Common myeloid progenitor, CD34-positive (primary cell): ENCODE measurements at regions of chr2 and their contacts with region 1.

Region 1: DNA sequence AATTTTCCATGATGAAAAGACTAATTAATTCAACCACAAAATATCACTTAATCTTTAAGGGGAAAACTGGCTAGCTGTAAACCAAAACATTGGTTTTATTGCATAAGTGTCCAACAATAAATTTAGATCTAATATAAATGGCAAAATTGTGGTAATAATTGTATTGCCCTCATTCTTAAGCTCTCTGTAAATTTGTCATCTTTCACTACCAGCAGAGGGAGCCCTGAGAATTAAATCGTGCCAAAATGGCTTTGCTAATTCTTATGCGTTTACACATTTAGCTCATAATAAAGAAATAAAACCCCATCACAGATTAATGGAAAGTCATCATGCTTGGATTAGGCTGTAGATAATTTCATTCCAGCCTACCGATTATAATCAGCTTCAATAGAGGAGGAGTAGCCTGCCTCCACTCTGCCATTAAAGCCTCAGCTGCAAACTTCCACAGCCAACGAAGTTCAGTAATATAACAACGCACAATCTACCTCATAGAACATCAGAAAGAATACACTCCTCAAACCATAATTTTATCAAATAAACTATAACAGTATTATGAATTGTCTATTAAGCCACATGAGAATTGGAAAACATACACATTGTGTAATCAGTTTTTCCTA is 70.0 kb upstream of the ATP5MC3 start:
- DNase-seq: peak; percentile 44 to 73 (median 66)
- H3K4me3 ChIP-seq: no peak overlapping the region
- H3K27ac ChIP-seq: no peak overlapping the region
- H3K4me1 ChIP-seq: no peaks in the 10 kb centered on the region
- H3K27me3 ChIP-seq: peaks cover 2 to 36% (median 9%) of the 10 kb centered on the region in 5 experiments

Region 2: GRCh38 chr2:175275539-175275938 is 24.0 kb after region 1 on chr2:
- CTCF ChIA-PET with region 1: interaction called, 10 read pairs
- POLR2A ChIA-PET with region 1: no interaction called
- DNase-seq: no peak
- H3K4me3 ChIP-seq: no peak overlapping the region
- H3K27ac ChIP-seq: no peak overlapping the region
- H3K4me1 ChIP-seq: no peaks in the 10 kb centered on the region
- H3K27me3 ChIP-seq: peaks cover 0 to 8% (median 2%) of the 10 kb centered on the region in 5 experiments

Region 3: DNA sequence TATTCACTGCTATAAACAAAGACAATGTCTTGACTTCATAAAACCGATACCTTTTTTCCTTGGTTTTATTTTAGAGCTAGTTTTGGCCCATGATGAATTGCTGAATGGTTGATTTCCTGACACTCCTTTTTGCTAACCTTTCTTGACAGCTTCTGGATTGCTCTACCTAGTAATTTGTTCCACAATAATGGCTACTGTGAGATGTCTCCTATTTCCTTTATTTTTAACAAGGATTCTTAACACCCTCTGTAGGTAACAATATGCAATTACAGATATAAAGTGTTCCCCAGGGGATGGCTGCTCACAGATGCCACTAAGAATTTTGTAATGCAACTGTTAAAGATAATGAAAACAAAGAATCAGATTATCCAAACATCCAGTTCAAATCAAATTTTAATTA is 30.8 kb after region 1 on chr2:
- CTCF ChIA-PET with region 1: interaction called, 31 read pairs
- POLR2A ChIA-PET with region 1: no interaction called
- DNase-seq: peak; percentile 16 to 37 (median 29)
- H3K4me3 ChIP-seq: no peak overlapping the region
- H3K27ac ChIP-seq: no peak overlapping the region
- H3K4me1 ChIP-seq: no peaks in the 10 kb centered on the region
- H3K27me3 ChIP-seq: peaks cover 0 to 10% (median 6%) of the 10 kb centered on the region in 5 experiments

Region 4: DNA sequence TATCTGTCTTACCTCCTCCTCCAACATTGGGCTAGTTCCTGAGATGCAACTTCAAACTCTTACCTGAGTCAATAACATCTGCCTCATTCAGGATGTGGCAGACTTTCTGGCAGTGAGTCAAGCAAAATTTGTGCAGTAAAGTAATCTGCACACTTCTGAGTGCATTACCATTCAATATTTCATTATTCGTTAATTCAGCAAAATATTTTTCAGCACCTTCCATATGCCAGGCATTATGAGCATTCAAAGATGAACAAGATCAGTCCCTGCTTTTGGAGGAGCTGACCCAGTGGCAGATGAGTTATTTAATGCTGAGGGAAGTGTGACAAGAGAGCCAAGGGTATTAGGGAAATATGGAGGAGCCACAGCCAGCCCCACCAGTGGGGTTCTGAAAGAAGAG is 410.8 kb after region 1 on chr2:
- CTCF ChIA-PET with region 1: no interaction called
- POLR2A ChIA-PET with region 1: no interaction called
- DNase-seq: no peak
- H3K4me3 ChIP-seq: no peak overlapping the region
- H3K27ac ChIP-seq: no peak overlapping the region
- H3K4me1 ChIP-seq: no peaks in the 10 kb centered on the region
- H3K27me3 ChIP-seq: peaks cover 0 to 8% (median 2%) of the 10 kb centered on the region in 5 experiments